Mammary epithelial cell (primary cell): ENCODE measurements at regions of chr1 and their contacts with region 1.

Region 1: GRCh38 chr1:177948336-177948972 is 21.4 kb downstream of the SEC16B start:
- DNase-seq: peak; percentile 58
- H3K4me3 ChIP-seq: no peak overlapping the region
- H3K27ac ChIP-seq: no peak overlapping the region
- H3K4me1 ChIP-seq: peaks cover 9% of the 10 kb centered on the region
- H3K27me3 ChIP-seq: no peaks in the 10 kb centered on the region
- CTCF ChIP-seq: peak; percentile 94 to 96

Region 2: GRCh38 chr1:176949033-176949662 is 999.3 kb before region 1 on chr1:
- CTCF ChIA-PET with region 1: no interaction called
- dilution Hi-C with region 1: no loop called
- in situ Hi-C with region 1: no loop called
- intact Hi-C with region 1: loop called (anchors 1 kb)
- DNase-seq: peak; percentile 68
- H3K4me3 ChIP-seq: no peak overlapping the region
- H3K27ac ChIP-seq: no peak overlapping the region
- H3K4me1 ChIP-seq: no peaks in the 10 kb centered on the region
- H3K27me3 ChIP-seq: no peaks in the 10 kb centered on the region
- CTCF ChIP-seq: peak; percentile 81 to 91

Region 3: DNA sequence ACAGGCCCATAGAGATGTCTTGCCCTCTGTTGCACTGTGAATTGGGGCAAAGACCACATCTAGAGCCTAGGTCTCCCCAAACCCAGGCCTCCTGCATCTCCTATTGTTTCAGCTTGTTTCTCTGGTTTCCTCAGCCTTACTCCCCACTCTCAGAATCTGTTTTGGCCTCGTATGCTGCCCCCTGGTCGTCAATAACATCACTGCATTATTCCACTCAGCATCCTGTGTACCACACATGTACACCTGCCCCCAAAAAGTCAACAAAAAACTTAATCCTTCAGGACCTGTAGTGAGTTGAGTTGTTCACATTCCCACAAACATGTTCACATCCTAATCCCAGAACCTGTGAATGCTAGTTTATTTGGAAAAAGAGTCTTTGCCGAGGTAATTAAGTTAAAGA is 592.9 kb before region 1 on chr1:
- CTCF ChIA-PET with region 1: no interaction called
- dilution Hi-C with region 1: no loop called
- in situ Hi-C with region 1: no loop called
- intact Hi-C with region 1: loop called (anchors 5 kb)
- DNase-seq: peak; percentile 41
- H3K4me3 ChIP-seq: no peak overlapping the region
- H3K27ac ChIP-seq: no peak overlapping the region
- H3K4me1 ChIP-seq: no peaks in the 10 kb centered on the region
- H3K27me3 ChIP-seq: no peaks in the 10 kb centered on the region
- CTCF ChIP-seq: peak; percentile 51 to 59

Region 4: GRCh38 chr1:177780096-177780700 is 168.3 kb before region 1 on chr1:
- CTCF ChIA-PET with region 1: no interaction called
- dilution Hi-C with region 1: no loop called
- in situ Hi-C with region 1: no loop called
- intact Hi-C with region 1: loop called (anchors 1 kb)
- DNase-seq: peak; percentile 51
- H3K4me3 ChIP-seq: no peak overlapping the region
- H3K27ac ChIP-seq: no peak overlapping the region
- H3K4me1 ChIP-seq: no peaks in the 10 kb centered on the region
- H3K27me3 ChIP-seq: no peaks in the 10 kb centered on the region
- CTCF ChIP-seq: peak; percentile 49 to 71

Region 5: GRCh38 chr1:177913762-177914540 is 34.5 kb before region 1 on chr1:
- CTCF ChIA-PET with region 1: no interaction called
- dilution Hi-C with region 1: no loop called
- in situ Hi-C with region 1: no loop called
- intact Hi-C with region 1: loop called (anchors 2 kb)
- DNase-seq: peak; percentile 32
- H3K4me3 ChIP-seq: no peak overlapping the region
- H3K27ac ChIP-seq: no peak overlapping the region
- H3K4me1 ChIP-seq: peaks cover 31% of the 10 kb centered on the region
- H3K27me3 ChIP-seq: no peaks in the 10 kb centered on the region
- CTCF ChIP-seq: peak; percentile 68 to 79